Cardiac septum (tissue), 1 donor: ENCODE measurements at regions of chr12 and their contacts with region 1.

Region 1: DNA sequence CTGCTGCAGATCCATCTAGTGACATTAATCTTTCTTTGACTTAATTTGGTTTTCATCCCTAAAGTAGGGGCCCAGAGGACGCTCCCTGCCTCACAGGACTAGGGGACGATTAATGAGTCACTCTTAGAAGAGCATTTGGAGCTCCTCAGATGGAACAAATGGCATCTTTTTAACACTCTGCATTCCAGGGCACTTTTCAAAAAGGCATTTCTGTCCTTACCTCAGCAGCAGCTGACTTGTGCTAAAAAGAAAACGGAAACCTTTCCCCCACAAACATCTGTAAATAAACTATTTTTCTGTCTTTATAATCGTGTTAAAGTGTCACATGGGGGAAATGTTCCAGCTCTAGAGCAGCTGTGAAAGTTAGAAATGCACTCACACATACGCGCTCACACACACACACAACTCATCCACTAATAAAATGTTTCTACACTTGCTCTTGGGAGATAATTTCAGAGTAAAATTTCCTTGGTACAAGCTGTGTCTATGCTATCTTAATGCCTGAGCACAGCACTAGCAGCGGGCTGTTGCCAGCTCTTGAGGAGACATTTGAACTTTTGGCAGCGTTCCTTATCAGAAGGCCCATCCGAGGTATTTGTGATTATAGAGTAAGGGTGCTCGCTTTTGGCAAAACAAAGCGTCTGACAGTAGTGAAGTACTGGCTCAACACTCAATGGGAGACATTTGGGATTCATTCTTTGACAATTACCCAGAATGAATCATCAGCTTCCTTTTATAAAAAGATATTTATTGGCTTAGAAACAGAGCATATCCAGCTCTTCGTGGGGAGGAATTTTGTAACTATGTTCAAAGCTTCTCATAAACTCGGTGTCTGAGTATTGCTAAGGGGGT is 141.3 kb downstream of the PLXNC1 start:
- DNase-seq: no peak

Region 2: GRCh38 chr12:94092516-94093241 is 197.0 kb before region 1 on chr12:
- intact Hi-C with region 1: no loop called
- DNase-seq: no peak

Region 3: GRCh38 chr12:94269316-94269999 is 20.2 kb before region 1 on chr12:
- intact Hi-C with region 1: loop called (anchors 2 kb)
- DNase-seq: no peak